Activated CD8-positive, alpha-beta memory T cell treated with anti-CD3 and anti-CD28 coated beads, Interleukin-2, amount 10 ng/mL, durations not matched to agents 7 days and 5 days (primary cell): ENCODE measurements at regions of chr6 and their contacts with region 1.

Region 1: DNA sequence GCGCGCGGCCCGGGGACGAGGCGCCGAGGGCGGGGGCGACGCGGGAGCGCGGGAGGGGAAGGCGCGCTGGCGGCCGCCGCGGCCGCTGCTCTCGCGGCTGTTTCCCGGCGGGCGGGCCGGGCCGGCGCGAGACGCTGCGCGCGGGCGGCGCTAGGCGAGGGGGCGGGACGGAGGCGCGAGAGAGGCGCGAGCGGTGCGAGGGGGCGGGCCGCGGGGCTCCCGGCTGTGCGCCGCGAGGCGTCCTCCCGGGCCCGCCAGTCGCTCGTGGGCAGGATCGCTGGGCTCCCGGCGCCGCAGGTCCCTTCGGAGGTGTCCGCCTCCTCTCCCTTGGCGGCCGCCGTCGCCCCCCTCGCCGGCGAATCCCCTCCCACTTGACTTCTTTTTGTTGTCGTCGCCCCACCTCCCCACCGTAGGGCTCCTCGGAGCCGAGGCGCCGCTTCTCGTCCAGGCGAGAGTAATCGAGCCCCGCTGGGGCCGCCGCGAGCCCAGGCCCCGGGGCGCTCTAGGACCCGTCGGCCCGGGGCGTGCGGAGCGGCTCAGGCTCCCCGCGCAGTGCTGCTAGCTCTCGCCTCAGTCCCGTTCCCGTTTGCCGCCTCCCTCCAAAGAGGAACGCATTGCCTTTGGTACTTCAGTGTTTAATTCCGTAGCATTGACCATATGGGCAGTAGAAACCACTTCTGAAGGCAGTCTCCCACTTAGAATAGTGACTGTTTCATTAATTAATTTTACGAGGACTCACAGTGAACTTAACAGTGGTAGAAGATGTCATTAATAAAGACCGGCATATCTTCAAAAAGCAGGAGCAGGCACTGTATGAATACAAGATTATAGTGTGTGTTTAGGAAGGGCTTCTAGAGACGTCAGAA is at the start of gene RANBP9:
- DNase-seq: peak; percentile 92
- ATAC-seq: peak; percentile 86
- H3K4me3 Mint-ChIP-seq: peak within 1 kb of the TSS; percentile 91
- H3K27ac Mint-ChIP-seq: peak within 1 kb of the TSS; percentile 96
- H3K4me1 Mint-ChIP-seq: peaks cover 53% of the 10 kb centered on the region
- H3K27me3 Mint-ChIP-seq: no peaks in the 10 kb centered on the region
- total RNA-seq, gene RANBP9: 57.2 to 74.3 TPM

Region 2: GRCh38 chr6:13767121-13767808 is 55.3 kb after region 1 on chr6:
- CTCF ChIA-PET with region 1: interaction called, 14 read pairs
- DNase-seq: peak; percentile 69
- ATAC-seq: peak; percentile 57
- H3K4me3 Mint-ChIP-seq: peak overlapping the region; percentile 72
- H3K27ac Mint-ChIP-seq: peak overlapping the region; percentile 73
- H3K4me1 Mint-ChIP-seq: peaks cover 48% of the 10 kb centered on the region
- H3K27me3 Mint-ChIP-seq: no peaks in the 10 kb centered on the region